ENCODE measurements at regions of chr2 and their contacts with region 1.

Region 1: DNA sequence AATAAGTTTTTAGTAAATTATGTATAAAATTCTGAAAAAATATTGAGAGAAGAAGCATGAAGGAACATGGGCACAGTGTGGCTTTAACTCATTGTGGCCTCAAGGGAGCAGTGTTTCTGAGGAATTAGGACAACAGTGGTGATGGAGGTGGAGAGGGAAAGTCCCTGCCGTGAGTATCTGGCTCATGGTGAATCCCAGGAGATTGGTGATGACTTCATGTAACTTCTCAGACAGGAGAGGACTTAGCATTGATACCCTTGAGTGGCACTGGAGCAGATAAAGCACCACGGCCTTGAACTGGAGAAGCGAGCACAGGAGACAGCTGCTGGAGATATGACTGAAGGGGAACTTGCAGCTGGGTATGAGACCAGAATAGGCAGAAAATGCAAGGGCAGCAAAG is 35.0 kb upstream of the LRP1B start:
- DNase-seq: peak; percentile 65
- ATAC-seq: peak; percentile 100
- H3K4me3 ChIP-seq: no peak overlapping the region
- H3K27ac ChIP-seq: no peak overlapping the region
- H3K4me1 ChIP-seq: no peaks in the 10 kb centered on the region
- H3K27me3 ChIP-seq: peaks cover 8% of the 10 kb centered on the region; the same call in 1 of the 2 replicates
- CTCF ChIP-seq: peak; percentile 63

Region 2: DNA sequence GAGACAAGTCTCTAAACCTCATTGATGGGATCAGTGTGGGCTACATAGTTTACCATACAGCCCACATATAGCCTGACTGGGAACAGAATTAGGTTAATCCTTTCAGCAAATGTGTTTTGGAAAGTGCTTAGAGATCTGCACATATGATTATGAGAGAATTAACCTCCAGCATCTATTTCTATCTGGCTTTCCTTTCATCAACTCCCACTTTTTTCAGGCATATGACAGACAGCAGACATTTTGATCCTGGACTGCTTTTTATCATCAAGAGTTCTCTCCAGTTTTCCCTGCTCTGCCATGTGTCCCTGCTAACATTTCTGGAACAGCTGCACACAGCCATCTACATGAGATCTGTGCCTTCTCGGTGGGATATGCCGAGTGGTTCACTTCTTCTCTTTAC is 104.5 kb after region 1 on chr2:
- CTCF ChIA-PET with region 1: no interaction called
- POLR2A ChIA-PET with region 1: no interaction called
- intact Hi-C with region 1: loop called (anchors 10 kb)
- DNase-seq: no peak
- ATAC-seq: no peak
- H3K4me3 ChIP-seq: no peak overlapping the region
- H3K27ac ChIP-seq: no peak overlapping the region
- H3K4me1 ChIP-seq: no peaks in the 10 kb centered on the region
- H3K27me3 ChIP-seq: no peaks in the 10 kb centered on the region
- CTCF ChIP-seq: no peak

Region 3: DNA sequence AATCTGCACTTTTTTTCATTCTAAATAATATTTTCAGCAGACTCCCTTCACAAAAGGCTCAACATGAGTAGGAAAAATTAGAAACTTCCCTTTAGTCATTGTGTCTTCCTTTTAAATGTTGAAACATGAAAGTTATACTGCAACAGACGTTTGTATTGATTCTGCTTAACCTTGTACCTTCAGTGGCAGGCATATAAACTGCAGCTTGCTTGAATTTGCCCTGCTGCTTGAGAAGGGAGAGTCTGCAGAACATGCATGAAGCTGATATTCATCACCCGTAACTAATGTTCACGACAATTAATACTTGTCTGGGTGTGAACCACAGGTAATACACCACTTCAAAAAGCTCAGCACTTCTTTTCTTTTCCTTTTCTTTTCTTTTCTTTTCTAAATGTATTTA is 259.8 kb after region 1 on chr2:
- CTCF ChIA-PET with region 1: interaction called, 5 read pairs
- POLR2A ChIA-PET with region 1: no interaction called
- intact Hi-C with region 1: loop called (anchors 10 kb)
- DNase-seq: no peak
- ATAC-seq: peak; percentile 92
- H3K4me3 ChIP-seq: peak overlapping the region; percentile 24; the same call in 1 of the 2 replicates
- H3K27ac ChIP-seq: no peak overlapping the region
- H3K4me1 ChIP-seq: peaks cover 13% of the 10 kb centered on the region; the same call in 1 of the 2 replicates
- H3K27me3 ChIP-seq: peaks cover 4% of the 10 kb centered on the region; the same call in 1 of the 2 replicates
- CTCF ChIP-seq: no peak

Region 4: DNA sequence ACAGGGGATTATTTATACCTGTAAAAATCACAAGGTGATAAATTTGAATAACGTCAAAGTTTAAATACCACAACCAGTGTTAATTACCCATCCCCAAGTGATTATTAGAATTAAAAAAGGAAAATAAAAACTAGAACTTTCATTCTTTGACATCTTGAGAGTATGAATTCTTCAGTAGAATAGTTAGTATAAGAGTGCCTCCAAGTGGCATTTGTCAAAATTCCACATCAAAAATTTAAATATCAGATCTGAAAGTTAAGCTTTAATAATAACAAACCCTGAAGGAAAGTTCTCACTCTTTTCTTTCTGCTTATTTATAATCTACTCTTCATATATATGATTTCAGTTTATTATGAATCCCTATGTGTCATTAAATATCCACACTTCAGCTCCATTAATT is 438.0 kb after region 1 on chr2:
- CTCF ChIA-PET with region 1: interaction called, 3 read pairs
- POLR2A ChIA-PET with region 1: no interaction called
- intact Hi-C with region 1: loop called (anchors 1 kb)
- DNase-seq: peak; percentile 59
- ATAC-seq: no peak
- H3K4me3 ChIP-seq: no peak overlapping the region
- H3K27ac ChIP-seq: no peak overlapping the region
- H3K4me1 ChIP-seq: peaks cover 26% of the 10 kb centered on the region
- H3K27me3 ChIP-seq: no peaks in the 10 kb centered on the region
- CTCF ChIP-seq: peak; percentile 71

Region 5: DNA sequence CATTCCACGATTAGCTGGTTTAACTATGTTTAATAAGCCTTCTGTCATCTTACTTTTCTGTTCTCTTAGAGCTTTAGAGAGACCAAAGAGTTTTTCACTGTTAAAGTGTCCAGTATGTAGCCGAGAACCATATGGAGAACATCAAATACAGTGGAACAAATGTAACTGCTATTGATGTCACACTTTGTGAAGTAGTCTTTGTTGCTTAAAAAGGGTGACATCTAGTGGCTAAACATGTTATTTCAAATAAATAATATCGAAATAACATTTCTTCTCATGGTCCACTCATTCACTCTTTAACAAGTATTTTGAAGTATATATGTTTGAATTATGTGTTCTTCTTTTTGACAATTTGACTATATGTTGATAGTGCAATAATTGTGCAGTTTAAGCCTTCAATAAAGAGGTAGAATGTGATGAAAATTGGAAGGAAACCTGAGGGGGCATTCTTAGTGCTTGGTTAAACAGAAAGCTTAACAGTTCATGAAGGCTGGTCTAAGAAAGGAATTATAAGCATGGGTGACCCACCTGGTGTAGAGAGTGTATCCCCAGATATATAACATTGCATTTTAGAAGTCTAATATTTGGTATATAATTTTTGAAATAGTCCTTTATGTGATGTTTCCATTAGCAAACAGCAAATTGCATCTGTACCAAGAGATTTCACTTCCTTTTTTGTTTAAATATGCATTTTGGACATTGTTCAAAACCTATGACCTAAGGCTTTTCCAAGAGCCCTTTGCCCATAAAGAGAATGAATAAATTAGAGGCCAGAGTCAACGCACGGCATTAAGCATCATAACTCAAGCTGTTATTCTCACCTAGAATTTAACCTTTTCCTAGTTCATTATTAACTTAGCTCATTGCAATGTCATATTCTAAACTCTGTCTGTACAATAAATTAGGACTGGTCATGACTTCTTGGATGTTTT is 823.7 kb after region 1 on chr2:
- CTCF ChIA-PET with region 1: no interaction called
- POLR2A ChIA-PET with region 1: no interaction called
- intact Hi-C with region 1: loop called (anchors 10 kb)
- DNase-seq: peak; percentile 61
- ATAC-seq: peak; percentile 55
- H3K4me3 ChIP-seq: no peak overlapping the region
- H3K27ac ChIP-seq: no peak overlapping the region
- H3K4me1 ChIP-seq: no peaks in the 10 kb centered on the region
- H3K27me3 ChIP-seq: no peaks in the 10 kb centered on the region
- CTCF ChIP-seq: peak; percentile 71